ENCODE measurements at regions of chr1 and their contacts with region 1.

Region 1: GRCh38 chr1:110203021-110203661 is 7.0 kb upstream of the KCNC4 start:
- DNase-seq: peak; percentile 71
- H3K4me3 Mint-ChIP-seq: no peak overlapping the region
- H3K27ac Mint-ChIP-seq: no peak overlapping the region
- H3K4me1 Mint-ChIP-seq: no peaks in the 10 kb centered on the region
- H3K27me3 Mint-ChIP-seq: no peaks in the 10 kb centered on the region
- CTCF ChIP-seq: peak; percentile 67

Region 2: DNA sequence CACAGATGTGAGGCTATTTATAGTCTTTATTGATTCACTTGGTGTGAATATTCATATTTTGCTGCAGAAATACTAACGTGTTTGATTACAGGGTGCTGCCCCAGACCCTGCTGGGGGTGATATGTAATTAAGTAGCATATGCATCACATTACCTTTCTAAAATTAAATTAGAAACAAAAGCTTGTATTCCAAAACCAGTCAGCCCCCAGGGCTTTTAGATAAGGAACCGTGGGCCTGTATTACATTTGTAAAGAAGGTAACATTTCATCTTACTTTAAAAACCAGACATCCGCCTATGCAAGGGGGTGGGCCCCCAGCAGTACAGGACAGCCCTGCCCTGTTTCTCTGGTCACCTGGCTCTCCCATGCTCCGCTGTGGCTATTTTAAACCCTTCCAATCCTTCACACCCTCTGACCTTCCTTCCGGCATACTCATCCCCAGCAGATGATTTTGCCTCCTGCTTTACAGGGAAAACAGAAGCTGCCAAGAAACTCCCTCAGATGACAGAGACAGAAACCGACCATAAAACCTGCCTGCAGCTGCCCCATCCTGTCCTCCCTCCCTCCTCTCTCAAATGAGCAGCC is 15.0 kb before region 1 on chr1:
- CTCF ChIA-PET with region 1: interaction called, 23 read pairs
- POLR2A ChIA-PET with region 1: interaction called, 4 read pairs
- intact Hi-C with region 1: no loop called
- DNase-seq: peak; percentile 45
- H3K4me3 Mint-ChIP-seq: no peak overlapping the region
- H3K27ac Mint-ChIP-seq: no peak overlapping the region
- H3K4me1 Mint-ChIP-seq: peaks cover 6% of the 10 kb centered on the region
- H3K27me3 Mint-ChIP-seq: peaks cover 34% of the 10 kb centered on the region
- CTCF ChIP-seq: no peak

Region 3: DNA sequence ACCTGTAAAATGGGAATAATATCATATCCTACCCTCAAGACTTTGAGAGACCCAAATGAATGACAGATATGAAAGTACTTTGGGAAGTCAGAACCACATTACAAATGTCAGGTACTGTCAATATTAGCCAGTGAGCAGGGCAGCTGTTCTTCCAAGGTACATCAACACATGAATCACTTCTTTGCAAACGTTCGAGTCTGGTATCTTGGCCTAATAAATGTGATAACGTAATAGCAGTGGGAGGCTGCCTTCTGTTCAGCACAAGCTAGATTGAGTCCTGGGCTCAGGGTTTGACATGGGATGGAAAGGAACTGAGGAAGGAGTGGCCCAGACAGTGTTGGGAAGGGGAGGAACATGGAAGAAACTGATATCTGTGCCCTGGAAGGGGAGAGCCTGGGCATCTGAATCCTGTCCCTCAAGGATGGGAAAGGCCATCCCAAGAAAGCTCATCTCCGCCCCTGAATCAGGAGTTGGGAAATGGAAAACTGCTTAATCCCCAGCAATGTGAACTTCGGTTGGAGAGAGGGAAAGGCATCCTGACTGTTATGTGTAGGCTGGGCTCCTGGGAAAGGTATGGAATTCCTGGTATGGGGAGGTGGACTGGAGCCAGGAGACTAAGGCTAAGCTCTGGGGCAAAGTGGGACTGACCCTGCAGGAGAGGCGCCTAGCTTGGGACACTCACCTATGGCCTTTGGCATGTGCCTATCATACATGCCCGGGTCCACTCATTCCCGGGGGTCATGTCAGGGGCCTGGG is 21.3 kb after region 1 on chr1:
- CTCF ChIA-PET with region 1: interaction called, 18 read pairs
- POLR2A ChIA-PET with region 1: no interaction called
- intact Hi-C with region 1: no loop called
- DNase-seq: no peak
- H3K4me3 Mint-ChIP-seq: no peak overlapping the region
- H3K27ac Mint-ChIP-seq: no peak overlapping the region
- H3K4me1 Mint-ChIP-seq: peaks cover 9% of the 10 kb centered on the region
- H3K27me3 Mint-ChIP-seq: no peaks in the 10 kb centered on the region
- CTCF ChIP-seq: no peak

Region 4: DNA sequence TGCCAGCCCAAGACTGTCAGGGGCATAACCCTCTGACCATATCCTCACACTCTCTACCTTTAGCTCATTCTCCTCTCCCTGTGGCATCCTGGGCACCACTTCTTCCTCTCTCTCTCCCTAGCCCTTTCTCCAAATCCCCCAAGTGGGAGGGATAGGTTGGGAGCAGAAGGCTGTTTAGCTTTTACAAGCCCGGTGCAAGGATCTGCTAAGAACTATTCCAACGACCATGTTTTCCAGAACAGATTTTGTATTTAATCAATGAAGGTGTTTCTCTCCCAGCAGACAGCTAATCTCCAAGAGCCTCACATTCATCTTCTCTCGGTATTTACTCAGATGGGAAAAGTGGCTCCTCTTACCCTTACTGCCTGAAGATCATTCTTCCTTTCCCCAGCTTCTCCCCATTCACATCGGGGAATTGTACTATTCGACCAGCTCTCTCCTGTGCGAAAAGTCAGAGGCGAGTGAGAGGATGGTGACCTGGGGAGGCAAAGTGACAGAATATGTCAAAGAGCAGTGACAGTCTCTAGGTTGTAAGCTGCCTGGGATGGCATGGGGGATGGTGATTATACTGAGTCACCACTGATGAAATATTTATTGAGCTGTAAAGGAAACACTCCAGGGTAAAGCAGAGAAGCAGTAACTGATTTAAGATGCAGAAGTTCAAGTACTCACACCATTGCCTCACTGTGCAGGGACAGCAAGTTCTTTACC is 89.0 kb after region 1 on chr1:
- CTCF ChIA-PET with region 1: interaction called, 1,128 read pairs
- POLR2A ChIA-PET with region 1: no interaction called
- intact Hi-C with region 1: no loop called
- DNase-seq: peak; percentile 36
- H3K4me3 Mint-ChIP-seq: no peak overlapping the region
- H3K27ac Mint-ChIP-seq: no peak overlapping the region
- H3K4me1 Mint-ChIP-seq: peaks cover 19% of the 10 kb centered on the region
- H3K27me3 Mint-ChIP-seq: no peaks in the 10 kb centered on the region
- CTCF ChIP-seq: no peak

Region 5: DNA sequence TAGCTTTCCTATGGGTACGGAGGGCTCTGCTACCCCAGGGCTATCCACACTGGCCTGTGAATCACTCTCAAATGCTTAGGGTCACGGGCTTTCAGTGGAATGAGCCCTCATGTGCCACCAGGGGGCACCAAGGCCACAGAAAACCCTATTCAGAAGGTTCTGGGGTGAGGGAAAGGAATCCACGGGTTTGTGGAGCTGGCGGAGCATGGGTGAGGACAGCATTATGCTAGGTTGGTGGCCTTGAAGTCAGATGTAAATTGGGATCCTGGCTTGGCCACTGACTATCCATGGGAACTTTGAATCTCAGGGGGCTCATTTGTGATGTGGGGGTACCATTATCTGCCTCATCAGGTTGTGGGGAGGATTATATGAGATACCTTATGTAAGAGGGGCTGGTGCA is 209.4 kb after region 1 on chr1:
- CTCF ChIA-PET with region 1: interaction called, 56 read pairs
- POLR2A ChIA-PET with region 1: no interaction called
- intact Hi-C with region 1: loop called (anchors 1 kb)
- DNase-seq: peak; percentile 84
- H3K4me3 Mint-ChIP-seq: no peak overlapping the region
- H3K27ac Mint-ChIP-seq: peak overlapping the region; percentile 17
- H3K4me1 Mint-ChIP-seq: peaks cover 12% of the 10 kb centered on the region
- H3K27me3 Mint-ChIP-seq: no peaks in the 10 kb centered on the region
- CTCF ChIP-seq: peak; percentile 87